Heart left ventricle (tissue), 16 donors: ENCODE measurements at regions of chr4 and their contacts with region 1.

Region 1: DNA sequence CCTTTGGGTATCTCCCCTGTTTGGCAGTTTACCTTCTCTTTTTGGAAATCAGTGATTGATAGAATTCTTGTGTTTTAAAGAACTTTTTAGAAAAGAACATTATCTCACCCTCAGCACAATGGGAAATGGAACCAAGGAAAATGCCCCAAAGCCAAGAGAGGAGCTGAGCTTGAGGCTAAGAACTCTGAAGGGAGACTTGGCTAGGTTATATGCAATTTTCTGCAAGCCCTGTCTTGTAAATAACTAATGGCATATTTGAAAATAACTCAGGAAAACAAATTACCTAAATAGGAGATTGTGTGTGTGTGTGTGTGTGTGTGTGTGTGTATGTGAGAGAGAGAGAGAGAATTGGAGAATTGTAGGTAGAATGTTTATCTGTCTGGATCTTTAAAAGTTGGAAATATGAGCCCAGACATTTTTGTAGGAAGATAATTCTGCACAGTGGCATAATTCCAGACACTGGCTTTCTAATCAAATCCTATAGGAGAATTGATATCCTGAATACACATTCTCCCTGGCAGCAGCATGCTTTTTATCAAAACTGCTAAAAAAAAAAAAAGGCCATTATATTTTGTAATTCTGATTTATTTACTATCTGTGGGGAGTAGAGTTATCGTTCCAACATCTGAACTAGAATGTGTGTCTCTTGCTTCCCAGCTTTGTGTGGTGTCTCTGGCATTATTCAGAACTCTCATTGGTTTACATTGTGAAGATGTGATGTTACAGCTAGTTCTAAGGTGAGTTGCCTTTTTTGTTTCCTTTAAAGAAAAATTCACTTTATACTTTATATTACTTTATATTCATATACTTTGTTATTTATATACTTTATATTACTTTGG is 122.6 kb downstream of the GATB start:
- DNase-seq: no peak
- ATAC-seq: no peak
- H3K4me3 ChIP-seq: no peak overlapping the region
- H3K27ac ChIP-seq: no peak overlapping the region
- H3K4me1 ChIP-seq: peaks cover 0 to 4% (median 0%) of the 10 kb centered on the region in 12 donors
- H3K27me3 ChIP-seq: no peaks in the 10 kb centered on the region
- CTCF ChIP-seq: no peak
- POLR2A ChIP-seq: no peak

Region 2: DNA sequence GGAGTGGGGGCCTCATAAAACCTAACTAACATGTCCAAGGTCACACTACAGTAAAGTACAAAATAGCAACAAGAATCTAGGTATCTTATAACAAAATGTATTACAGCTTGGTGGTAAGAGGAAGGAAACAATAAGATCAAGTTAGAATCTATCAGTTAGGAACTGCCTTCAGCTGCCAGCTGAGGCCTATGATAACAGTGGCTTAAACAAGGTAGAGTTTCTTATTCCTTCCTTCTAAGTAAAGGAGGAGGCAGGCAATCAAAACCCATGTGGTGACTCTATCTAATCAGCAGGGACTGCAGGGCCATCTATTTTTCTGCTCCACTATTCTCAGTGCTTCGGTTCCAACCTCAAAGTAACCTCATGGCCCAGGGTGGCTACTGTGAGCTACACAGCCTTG is 323.8 kb before region 1 on chr4:
- intact Hi-C with region 1: no loop called
- DNase-seq: no peak
- ATAC-seq: peak in 3 of 4 donors; percentile 6 to 33 (median 10)
- H3K4me3 ChIP-seq: no peak overlapping the region
- H3K27ac ChIP-seq: peak overlapping the region; percentile 76 to 97 (median 86)
- H3K4me1 ChIP-seq: peaks cover 8 to 73% (median 41%) of the 10 kb centered on the region in 12 donors
- H3K27me3 ChIP-seq: no peaks in the 10 kb centered on the region
- CTCF ChIP-seq: no peak
- POLR2A ChIP-seq: no peak

Region 3: GRCh38 chr4:151806511-151806927 is 168.3 kb after region 1 on chr4:
- intact Hi-C with region 1: no loop called
- DNase-seq: peak in 4 of 5 donors; percentile 44 to 55 (median 50)
- ATAC-seq: peak; percentile 71 to 87 (median 82)
- H3K4me3 ChIP-seq: no peak overlapping the region
- H3K27ac ChIP-seq: peak overlapping the region; percentile 53 to 97 (median 82)
- H3K4me1 ChIP-seq: peaks cover 0 to 19% (median 5%) of the 10 kb centered on the region in 12 donors
- H3K27me3 ChIP-seq: no peaks in the 10 kb centered on the region
- CTCF ChIP-seq: no peak
- POLR2A ChIP-seq: no peak

Region 4: DNA sequence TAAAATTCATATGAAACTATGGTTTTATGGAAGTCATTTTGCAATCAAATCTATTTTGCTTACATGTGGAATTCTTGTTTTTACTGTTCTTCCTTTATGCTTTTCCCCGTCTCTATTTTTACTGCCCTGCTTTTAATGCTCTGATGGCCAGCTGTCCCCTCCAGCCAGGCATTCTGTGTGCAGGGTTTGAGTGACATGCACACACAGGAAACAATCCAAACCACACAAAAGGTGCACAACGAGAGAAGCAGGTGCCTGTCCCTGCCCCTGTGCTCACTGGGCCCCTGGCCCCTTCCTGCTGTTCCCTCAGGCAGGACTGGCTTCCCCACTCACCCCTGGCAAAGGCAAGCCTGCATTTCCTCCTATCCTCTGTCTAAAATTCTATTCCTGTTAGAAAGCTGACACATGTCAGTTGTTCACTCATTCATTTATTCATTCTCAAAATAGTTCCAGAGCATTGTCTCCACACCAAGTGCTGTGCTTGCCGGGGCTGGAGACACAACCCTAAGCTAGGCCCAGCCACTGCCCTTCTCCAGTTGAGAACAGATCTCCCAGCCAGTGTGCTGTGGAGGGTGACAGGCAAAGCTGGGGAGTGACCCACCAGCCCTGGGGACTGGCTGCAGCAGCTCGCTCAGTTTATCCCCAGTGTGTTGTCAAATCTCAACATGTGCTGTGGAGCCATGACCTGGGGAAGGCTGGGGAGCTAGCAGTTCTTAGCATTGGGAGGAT is 551.4 kb after region 1 on chr4:
- intact Hi-C with region 1: loop called in 1 of 10 experiments (anchors 5 kb)
- DNase-seq: no peak
- ATAC-seq: peak in 1 of 4 donors; percentile 27
- H3K4me3 ChIP-seq: no peak overlapping the region
- H3K27ac ChIP-seq: no peak overlapping the region
- H3K4me1 ChIP-seq: peaks cover 0 to 13% (median 5%) of the 10 kb centered on the region in 12 donors
- H3K27me3 ChIP-seq: no peaks in the 10 kb centered on the region
- CTCF ChIP-seq: no peak
- POLR2A ChIP-seq: no peak

Region 5: DNA sequence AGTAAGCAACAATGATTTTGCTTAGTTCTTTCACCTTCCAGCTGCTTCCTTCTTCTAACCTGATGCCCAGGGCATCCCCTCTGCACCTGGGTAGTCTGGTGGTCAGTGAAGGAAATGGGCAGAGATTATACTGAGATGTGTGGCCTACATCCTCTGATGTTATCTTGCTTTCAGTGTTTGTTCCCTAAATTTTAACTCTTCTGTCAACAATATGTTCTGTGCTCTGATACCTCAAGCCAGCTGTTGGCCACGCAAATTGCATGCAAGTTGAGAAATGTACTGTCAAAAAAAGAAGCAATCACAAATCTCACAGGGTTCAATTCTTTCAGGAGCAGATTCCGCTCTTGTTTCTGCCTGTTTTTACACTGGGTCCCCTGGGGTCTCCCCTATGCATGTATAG is 823.8 kb after region 1 on chr4:
- intact Hi-C with region 1: no loop called
- DNase-seq: no peak
- ATAC-seq: peak in 2 of 4 donors; percentile 12 to 26
- H3K4me3 ChIP-seq: no peak overlapping the region
- H3K27ac ChIP-seq: peak overlapping the region in 2 of 12 donors; percentile 20 to 22
- H3K4me1 ChIP-seq: peaks cover 0 to 67% (median 5%) of the 10 kb centered on the region in 12 donors
- H3K27me3 ChIP-seq: no peaks in the 10 kb centered on the region
- CTCF ChIP-seq: no peak
- POLR2A ChIP-seq: no peak